Posterior cingulate gyrus (tissue), 11 donors: ENCODE measurements at regions of chr16 and their contacts with region 1.

Region 1: DNA sequence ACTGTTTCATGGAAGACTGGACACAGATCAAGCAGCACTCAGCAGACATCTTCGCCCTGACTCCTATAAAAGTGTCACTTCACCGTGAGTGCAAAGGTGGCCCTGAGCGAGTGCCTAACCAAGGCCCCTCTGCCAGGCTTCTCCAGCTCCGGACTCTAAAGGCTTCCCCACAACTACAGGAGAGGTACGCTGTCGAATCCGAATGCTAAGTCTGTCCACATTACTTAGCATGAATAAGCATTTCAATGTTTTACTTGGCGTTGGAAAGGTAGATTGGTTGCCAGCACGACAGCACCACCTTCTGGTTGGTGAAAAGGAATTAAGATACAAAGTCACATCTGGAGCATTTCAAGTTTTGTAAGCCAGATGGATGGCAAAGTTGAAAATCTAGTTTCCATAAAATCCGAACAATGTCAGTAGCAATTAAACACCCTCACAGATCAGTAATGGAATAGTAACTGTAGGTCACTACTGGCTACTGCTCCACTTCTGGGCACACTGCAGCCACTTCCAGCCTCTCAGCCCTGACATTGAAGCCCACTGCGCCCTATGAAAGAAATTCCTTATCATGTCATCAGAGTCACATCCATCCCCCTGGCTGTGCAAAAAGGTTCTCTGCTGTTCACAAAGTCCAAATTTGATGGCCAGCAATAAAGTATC is 100.9 kb downstream of the PARN start:
- DNase-seq: peak; percentile 47 to 94 (median 74)

Region 2: GRCh38 chr16:13919683-13920509 is 609.2 kb before region 1 on chr16 and contains the start of gene ERCC4:
- intact Hi-C with region 1: loop called (anchors 5 kb)
- DNase-seq: peak; percentile 96 to 100 (median 99)

Region 3: DNA sequence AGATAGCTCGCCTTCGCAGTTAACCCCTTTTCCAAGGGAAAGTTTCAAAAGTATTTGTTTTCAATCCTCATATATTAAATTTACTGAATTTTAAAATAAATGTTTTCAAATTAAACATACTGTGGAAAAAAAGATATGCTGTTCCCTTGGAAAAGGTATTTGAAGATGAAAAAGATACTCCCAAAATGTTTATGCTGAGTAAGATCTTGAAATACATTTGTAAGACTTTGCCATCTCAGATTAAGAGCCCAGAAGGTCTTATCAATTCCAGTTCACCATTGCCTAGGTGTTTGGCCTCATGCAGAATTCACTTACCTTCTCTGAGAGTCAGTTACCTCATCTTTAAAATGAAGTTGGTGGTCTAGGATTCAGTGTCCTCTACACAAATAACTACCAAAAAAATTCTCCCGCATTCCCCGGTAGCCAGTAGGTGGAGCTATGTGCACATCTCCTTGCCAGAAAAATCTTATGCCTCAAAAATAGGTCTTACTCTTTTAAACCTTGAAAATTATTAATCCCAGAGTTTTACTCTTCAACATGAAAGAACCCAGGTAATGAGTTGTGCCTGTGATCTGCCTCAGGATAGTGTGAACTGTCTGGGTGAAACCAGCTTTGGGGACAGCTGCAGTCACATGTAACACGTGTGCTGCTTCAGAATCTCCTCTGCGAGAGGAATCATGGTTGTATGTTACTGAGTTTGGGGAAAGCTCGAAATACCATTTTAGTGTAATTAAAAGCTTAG is 279.7 kb before region 1 on chr16:
- intact Hi-C with region 1: loop called (anchors 1 kb)
- DNase-seq: peak in 4 of 10 donors; percentile 26 to 54 (median 49)

Region 4: DNA sequence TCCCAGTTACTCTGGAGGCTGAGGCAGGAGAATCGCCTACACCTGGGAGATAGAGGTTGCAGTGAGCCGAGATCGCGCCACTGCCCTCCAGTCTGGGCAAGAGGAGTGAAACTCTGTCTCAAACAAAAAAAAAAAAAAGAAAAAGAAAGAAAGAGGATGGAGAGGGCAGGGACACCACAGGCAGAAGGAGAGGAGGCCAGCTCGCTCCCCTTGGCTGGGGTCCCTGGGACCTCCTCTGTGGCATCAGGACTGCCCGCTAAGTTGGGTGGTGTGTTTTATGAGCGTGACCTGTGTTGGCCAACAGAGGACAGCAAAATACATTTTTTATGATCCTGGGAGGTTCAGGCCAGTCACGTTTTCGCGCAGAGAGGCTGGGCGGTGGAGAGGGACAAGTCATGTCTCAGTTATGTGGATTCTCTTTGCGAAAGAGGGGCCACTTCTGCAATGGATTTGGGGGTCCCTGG is 228.4 kb before region 1 on chr16:
- intact Hi-C with region 1: loop called (anchors 1 kb)
- DNase-seq: peak in 9 of 10 donors; percentile 29 to 95 (median 59)

Region 5: DNA sequence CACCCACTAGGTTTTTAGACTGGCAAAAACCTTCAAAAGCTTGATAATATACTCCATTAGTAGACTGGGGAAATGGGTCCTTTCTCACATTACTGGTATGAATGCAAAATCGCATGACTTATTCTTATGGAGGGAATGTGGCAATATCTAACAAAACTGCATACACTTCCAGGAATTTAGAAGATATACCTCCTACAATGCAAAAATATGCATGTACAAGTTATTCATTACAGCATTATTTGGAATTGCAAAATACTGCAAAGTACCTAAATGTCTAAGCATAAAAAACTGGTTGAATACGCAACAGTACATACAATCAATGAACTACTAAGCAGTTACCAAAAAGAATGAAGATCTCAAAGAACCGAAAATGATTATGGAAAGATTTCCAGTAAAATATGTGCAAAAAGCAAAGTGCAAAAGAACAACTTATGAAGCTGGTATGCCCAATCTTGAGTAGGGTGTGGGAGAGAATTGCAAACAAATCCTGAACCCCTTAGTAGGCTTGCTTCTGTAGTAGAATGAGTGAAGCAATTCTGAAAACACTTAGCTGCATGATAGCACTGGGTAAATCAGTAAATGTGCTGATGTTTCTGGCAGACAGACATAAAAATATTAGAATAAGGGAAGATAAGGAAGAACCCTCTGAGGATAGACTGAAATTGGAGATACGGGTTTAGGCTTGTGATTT is 79.2 kb before region 1 on chr16:
- intact Hi-C with region 1: loop called (anchors 10 kb)
- DNase-seq: no peak

Region 6: DNA sequence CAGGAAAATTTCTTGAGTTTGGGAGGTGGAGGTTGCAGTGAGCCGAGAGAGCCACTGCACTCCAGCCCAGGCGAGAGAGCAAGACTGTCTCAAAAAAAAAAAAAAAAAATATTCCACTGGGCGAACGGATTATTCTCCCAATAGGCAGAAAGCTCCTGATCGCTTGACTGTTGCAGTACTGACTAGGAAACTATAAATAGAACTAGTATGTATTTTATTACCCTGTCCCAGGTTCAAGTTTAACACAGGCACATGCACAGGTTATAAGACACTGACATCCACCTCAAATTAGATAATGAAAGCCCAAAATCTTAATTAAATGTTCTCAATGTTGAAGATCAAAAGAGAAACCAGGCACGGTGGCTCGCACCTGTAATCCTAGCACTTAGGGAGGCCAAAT is 89.4 kb after region 1 on chr16:
- intact Hi-C with region 1: no loop called
- DNase-seq: no peak

Region 7: GRCh38 chr16:15141586-15141985 is 612.4 kb after region 1 on chr16:
- intact Hi-C with region 1: no loop called
- DNase-seq: peak in 2 of 10 donors; percentile 61 to 74